Astrocyte of the cerebellum (primary cell): ENCODE measurements at regions of chr17 and their contacts with region 1.

Region 1: GRCh38 chr17:17098426-17099179 is 56.3 kb downstream of the MPRIP start:
- DNase-seq: no peak
- H3K4me3 ChIP-seq: no peak overlapping the region
- CTCF ChIP-seq: no peak

Region 2: DNA sequence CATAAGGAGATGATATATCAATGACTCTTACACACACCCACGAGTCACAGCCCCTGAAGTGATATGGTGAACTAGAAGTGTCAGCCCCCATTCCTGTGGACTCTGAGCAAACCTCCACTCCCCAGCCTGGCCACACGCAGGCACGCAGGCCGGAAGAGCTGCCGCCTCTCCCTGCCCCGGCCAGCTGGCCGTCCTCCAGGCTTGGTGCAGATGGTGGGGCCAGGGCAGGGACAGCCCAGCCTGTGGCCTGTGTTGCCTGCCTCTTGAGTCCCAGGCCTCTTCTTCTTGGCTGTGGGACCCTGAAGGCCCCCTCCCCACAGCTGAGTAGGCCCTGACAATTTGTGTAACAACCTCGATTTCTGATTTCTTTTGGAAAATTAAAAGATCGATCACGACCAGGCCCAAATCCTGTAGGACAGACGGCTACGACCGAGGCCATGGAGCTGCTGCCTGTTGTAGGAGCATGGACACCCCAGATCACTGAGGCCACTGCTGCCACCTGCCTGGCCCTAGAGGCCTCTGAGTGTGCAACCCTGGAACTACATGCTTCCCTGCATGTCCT is 66.4 kb before region 1 on chr17:
- in situ Hi-C with region 1: no loop called
- DNase-seq: peak; percentile 15
- H3K4me3 ChIP-seq: no peak overlapping the region
- CTCF ChIP-seq: no peak

Region 3: DNA sequence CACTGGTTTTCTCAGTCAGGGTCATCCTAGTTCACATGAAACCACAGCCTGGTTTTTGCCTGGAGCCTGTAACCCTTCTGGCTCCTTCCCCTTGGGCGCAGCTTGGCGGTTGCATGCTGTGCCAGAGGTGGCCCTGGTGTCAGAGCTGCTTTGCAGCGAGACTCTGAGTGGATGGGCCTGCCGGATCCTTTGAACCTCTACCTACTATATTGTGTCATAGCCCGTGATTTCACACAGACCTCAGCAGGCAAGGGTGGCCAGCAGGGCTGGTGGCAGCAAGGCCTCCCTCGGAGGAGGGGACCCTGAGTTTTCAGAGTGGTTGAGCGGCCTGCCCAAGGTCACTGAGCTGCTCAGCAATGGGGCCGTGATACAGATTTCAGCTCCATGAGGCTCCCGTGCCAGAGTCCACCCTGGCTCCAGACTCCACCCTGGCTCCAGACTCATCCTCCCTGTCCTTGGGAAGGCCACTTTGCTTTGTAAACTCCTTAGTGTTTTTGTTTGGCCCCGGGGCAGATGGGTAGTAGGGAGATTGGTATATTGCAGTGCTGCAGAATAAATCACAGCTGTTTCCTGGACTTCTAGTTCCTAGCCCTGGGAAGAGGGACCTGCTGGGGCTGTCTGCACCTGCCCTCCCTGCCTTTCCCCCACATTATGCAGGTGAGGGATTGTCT is 46.7 kb before region 1 on chr17:
- in situ Hi-C with region 1: loop called (anchors 5 kb)
- DNase-seq: no peak
- H3K4me3 ChIP-seq: no peak overlapping the region
- CTCF ChIP-seq: no peak

Region 4: GRCh38 chr17:17186051-17186450 is 87.4 kb after region 1 on chr17:
- in situ Hi-C with region 1: loop called (anchors 5 kb)
- DNase-seq: no peak
- H3K4me3 ChIP-seq: no peak overlapping the region
- CTCF ChIP-seq: no peak